HEK293 (cell line): ENCODE measurements at regions of chr18 and their contacts with region 1.

Region 1: DNA sequence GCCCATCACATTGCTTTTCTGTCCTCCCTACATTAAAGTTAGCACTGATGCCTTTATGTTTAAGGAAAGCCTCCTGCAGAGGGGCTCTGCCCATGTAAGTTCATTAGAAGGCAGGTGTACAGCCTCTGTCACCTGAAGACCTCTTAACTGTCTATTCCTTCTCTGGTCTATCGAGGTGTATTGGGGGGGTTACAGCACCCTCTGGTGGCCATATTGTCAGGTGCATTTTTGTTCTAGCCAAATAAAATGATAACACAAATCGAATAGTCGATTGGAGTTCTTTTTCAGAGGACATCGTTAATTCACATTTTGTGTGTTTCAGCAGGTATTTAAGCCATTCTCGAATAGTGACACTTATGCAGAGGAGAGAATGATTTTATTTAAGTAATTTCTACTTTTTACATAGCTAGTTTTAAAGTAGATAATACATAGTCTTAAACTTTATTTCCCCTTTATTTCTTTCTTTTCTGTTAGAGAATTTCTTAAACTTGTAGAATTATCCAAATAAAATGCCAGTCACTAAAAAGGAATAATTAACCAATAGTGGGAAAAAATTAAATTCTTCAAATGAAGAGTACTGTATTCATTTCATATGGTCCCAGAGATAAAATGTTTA is 136.8 kb downstream of the NEDD4L start:
- H3K4me3 ChIP-seq: no peak overlapping the region
- H3K27ac ChIP-seq: no peak overlapping the region
- H3K4me1 ChIP-seq: peaks cover 5% of the 10 kb centered on the region; the same call in 1 of the 2 replicates
- CTCF ChIP-seq: peak; percentile 62

Region 2: DNA sequence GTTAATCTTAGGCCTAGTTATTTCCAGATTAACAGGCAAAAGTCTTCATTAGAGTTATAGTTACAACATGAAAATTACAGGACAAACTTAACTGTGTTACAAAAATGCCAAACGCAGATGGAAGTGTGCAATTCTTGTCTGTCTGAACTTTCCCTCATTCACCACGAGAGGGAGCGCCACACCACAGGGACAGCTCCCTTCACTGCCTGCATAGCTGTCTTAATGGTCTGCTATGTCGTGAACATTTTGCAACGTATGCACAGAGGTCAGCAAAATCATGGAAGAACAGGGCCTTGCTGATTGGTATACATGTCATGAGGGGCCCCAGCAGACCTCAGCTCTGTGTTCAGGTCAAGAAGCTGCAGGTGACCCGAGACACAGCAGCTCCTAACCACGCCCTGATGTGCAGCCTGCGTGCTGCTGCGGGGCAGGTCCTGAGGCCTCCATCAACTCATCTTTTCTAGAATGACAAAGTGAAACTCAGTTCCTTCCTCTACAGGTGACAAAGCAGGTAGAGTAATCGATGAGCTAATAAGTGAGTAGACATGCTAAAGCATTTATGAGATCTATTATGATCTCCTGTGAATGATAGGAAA is 298.9 kb before region 1 on chr18:
- CTCF ChIA-PET with region 1: interaction called, 15 read pairs
- POLR2A ChIA-PET with region 1: no interaction called
- H3K4me3 ChIP-seq: no peak overlapping the region
- H3K27ac ChIP-seq: no peak overlapping the region
- H3K4me1 ChIP-seq: no peaks in the 10 kb centered on the region
- CTCF ChIP-seq: peak; percentile 88

Region 3: DNA sequence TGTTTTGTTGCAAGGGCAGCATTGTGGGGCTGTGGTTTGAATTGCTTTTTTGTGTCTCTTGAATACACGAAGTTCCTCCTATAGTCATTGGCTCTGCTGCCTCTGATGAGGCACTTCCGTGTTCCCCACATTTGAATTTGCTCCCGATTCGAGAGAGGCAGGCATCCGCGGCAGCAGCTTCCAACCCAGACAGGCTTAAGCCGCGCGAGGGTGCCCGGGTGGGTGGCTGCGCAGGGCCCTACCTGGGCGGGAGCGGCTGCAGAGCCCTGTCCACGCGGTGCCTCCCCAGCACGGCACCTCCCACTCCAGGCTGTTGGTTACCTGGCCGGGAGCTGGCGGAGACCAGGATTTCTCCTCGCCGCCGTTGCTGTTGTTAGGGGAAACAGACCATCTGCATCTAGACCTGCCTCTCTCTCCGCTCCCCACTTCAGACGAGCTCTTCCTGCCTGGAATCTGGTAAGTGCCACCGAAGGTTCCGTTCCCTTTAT is 14.5 kb after region 1 on chr18:
- CTCF ChIA-PET with region 1: interaction called, 72 read pairs
- POLR2A ChIA-PET with region 1: no interaction called
- H3K4me3 ChIP-seq: peak overlapping the region; percentile 1; the same call in 1 of the 2 replicates
- H3K27ac ChIP-seq: no peak overlapping the region
- H3K4me1 ChIP-seq: peaks cover 9% of the 10 kb centered on the region
- CTCF ChIP-seq: no peak

Region 4: GRCh38 chr18:58202406-58202730 is 21.5 kb after region 1 on chr18:
- CTCF ChIA-PET with region 1: interaction called, 72 read pairs
- POLR2A ChIA-PET with region 1: no interaction called
- H3K4me3 ChIP-seq: no peak overlapping the region
- H3K27ac ChIP-seq: no peak overlapping the region
- H3K4me1 ChIP-seq: peaks cover 5% of the 10 kb centered on the region; the same call in 1 of the 2 replicates
- CTCF ChIP-seq: no peak

Region 5: GRCh38 chr18:58221060-58221725 is 40.3 kb after region 1 on chr18:
- CTCF ChIA-PET with region 1: interaction called, 13 read pairs
- POLR2A ChIA-PET with region 1: interaction called, 4 read pairs
- H3K4me3 ChIP-seq: peak overlapping the region; percentile 49
- H3K27ac ChIP-seq: peak overlapping the region; percentile 35
- H3K4me1 ChIP-seq: peaks cover 39% of the 10 kb centered on the region
- CTCF ChIP-seq: no peak; the same call in 1 of the 2 replicates

Region 6: DNA sequence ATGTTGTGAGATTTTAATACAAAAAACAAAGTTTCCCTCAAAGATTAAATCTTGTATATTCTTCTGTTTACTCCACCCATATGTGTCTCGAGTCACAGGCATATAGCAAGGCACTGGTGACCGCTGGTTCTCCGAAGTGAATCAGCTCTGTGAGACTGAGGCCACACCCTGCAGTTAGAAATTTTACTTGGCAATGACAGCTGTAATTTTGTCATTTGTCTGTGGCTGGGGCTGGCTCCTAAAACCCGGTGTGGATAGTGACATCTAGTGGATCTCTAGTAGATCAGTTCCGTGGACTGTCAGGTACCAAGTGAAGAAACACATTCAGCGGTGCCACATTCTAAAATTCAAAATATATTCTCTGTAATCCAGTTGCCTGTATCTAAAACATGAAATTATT is 141.1 kb after region 1 on chr18:
- CTCF ChIA-PET with region 1: interaction called, 13 read pairs
- POLR2A ChIA-PET with region 1: no interaction called
- H3K4me3 ChIP-seq: no peak overlapping the region
- H3K27ac ChIP-seq: no peak overlapping the region
- H3K4me1 ChIP-seq: peaks cover 18% of the 10 kb centered on the region
- CTCF ChIP-seq: peak; percentile 67